SK-N-SH (cell line): ENCODE measurements at regions of chr22 and their contacts with region 1.

Region 1: DNA sequence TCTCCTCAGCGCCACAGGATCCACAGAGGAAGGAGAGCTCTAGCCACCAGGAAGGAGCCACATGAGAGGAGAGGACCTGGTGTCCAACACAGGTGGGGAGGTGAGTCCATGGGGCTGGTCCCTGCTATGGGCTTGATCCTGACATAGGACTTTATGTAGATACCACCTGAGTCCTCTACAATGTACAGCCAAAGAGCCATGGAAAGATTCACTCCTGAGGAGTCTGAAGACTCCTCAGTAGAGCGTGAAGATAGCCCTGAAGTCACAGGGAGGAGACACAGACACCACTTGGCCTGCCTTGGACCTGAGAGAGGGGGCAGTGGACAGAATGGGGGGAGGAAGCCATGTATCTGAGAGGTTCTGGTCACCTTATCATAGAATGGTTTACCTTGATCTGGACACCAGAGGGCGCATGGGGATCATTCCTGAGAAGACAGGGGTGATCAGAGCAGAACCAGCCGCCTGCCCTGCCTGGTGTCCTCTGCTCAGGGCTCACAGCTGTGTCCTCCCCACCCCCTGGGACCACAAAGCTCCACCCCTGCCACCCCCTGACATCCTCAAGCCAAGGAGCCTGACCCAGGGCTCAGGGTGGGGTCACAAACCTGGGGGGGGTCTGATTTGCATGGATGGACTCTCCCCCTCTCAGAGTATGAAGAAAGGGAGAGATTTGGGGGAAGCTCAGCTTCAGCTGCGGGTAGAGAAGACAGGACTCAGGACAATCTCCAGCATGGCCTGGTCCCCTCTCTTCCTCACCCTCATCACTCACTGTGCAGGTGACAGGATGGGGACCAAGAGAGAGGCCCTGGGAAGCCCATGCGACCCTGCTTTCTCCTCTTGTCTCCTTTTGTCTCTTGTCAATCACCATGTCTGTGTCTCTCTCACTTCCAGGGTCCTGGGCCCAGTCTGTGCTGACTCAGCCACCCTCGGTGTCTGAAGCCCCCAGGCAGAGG is 77.0 kb downstream of the ZNF280B start:
- DNase-seq: peak; percentile 79
- H3K4me3 ChIP-seq: no peak overlapping the region
- H3K27ac ChIP-seq: no peak overlapping the region
- H3K4me1 ChIP-seq: no peaks in the 10 kb centered on the region
- H3K27me3 ChIP-seq: no peaks in the 10 kb centered on the region; the same call in 1 of the 2 replicates
- CTCF ChIP-seq: peak; percentile 68
- EP300 ChIP-seq: no peak
- RAD21 ChIP-seq: peak; percentile 71

Region 2: DNA sequence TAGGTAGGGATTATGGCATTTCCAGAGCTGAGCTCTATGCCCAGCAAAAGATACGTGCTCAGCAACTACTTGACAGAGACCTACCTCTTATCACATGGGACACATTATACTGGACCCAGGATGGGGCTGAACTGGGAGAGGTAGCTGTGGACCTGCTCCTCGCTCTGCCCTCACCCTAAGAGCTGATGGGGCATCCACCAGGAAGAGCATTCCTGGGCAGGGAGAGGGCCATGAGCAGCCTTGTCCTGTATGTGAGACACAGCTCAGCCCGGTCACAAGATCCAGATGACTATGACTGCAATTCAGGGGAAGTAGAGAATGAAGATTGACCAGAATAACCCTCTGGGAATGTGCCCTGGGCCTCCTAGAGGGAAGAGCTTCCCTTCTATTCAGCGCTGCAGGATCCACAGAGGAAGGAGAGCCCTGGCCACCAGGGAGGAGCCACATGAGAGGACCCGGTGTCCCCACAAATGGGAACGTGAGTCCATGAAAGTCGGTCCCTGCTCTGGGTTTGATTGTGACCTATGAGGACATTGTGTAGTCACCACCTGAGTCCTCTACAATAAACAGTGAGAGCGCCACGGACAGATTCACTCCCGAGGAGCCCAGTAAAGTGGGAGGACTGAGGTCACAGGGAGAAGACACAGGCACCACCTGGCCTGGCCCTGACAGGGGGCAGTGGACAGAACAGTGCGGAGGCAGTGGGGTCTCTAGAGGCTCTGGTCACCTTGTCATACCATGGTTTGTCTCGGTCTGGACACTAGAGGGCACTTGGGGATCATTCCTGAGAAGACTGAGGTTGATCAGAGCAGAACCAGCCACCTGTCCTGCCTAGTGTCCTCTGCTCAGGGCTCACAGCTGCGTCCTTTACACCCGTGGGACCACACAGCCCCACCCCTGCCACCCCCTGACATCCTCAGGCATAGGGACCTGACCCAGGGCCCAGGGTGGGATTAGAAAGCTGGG is 22.5 kb before region 1 on chr22:
- CTCF ChIA-PET with region 1: interaction called, 16 read pairs
- POLR2A ChIA-PET with region 1: no interaction called
- DNase-seq: peak; percentile 44
- H3K4me3 ChIP-seq: no peak overlapping the region
- H3K27ac ChIP-seq: no peak overlapping the region
- H3K4me1 ChIP-seq: no peaks in the 10 kb centered on the region
- H3K27me3 ChIP-seq: peaks cover 13% of the 10 kb centered on the region; the same call in 1 of the 2 replicates
- CTCF ChIP-seq: peak; percentile 46
- EP300 ChIP-seq: no peak
- RAD21 ChIP-seq: peak; percentile 33

Region 3: GRCh38 chr22:22414266-22414665 is 17.3 kb before region 1 on chr22:
- CTCF ChIA-PET with region 1: interaction called, 16 read pairs
- POLR2A ChIA-PET with region 1: no interaction called
- DNase-seq: no peak
- H3K4me3 ChIP-seq: no peak overlapping the region
- H3K27ac ChIP-seq: no peak overlapping the region
- H3K4me1 ChIP-seq: no peaks in the 10 kb centered on the region
- H3K27me3 ChIP-seq: no peaks in the 10 kb centered on the region; the same call in 1 of the 2 replicates
- CTCF ChIP-seq: no peak
- EP300 ChIP-seq: no peak
- RAD21 ChIP-seq: no peak

Region 4: GRCh38 chr22:22450343-22450839 is 18.8 kb after region 1 on chr22:
- CTCF ChIA-PET with region 1: interaction called, 10 read pairs
- POLR2A ChIA-PET with region 1: no interaction called
- DNase-seq: no peak
- H3K4me3 ChIP-seq: no peak overlapping the region
- H3K27ac ChIP-seq: no peak overlapping the region
- H3K4me1 ChIP-seq: no peaks in the 10 kb centered on the region; a peak in 1 of 4 replicates
- H3K27me3 ChIP-seq: peaks cover 4% of the 10 kb centered on the region; the same call in 1 of the 2 replicates
- CTCF ChIP-seq: no peak
- EP300 ChIP-seq: no peak
- RAD21 ChIP-seq: no peak